Thyroid gland (tissue), 4 donors: ENCODE measurements at regions of chr5 and their contacts with region 1.

Region 1: GRCh38 chr5:55691265-55692105 is 20.6 kb downstream of the SLC38A9 start:
- DNase-seq: no peak
- H3K4me3 ChIP-seq: no peak overlapping the region
- H3K27ac ChIP-seq: peak overlapping the region in 2 of 3 donors; percentile 36 to 44
- H3K4me1 ChIP-seq: no peaks in the 10 kb centered on the region
- H3K27me3 ChIP-seq: no peaks in the 10 kb centered on the region
- CTCF ChIP-seq: peak; percentile 29 to 78 (median 55)
- POLR2A ChIP-seq: no peak

Region 2: GRCh38 chr5:55344392-55344992 is 347.0 kb before region 1 on chr5:
- intact Hi-C with region 1: loop called (anchors 5 kb)
- DNase-seq: peak; percentile 67 to 68
- H3K4me3 ChIP-seq: no peak overlapping the region
- H3K27ac ChIP-seq: no peak overlapping the region
- H3K4me1 ChIP-seq: no peaks in the 10 kb centered on the region
- H3K27me3 ChIP-seq: no peaks in the 10 kb centered on the region
- CTCF ChIP-seq: peak; percentile 57 to 90 (median 82)
- POLR2A ChIP-seq: no peak

Region 3: DNA sequence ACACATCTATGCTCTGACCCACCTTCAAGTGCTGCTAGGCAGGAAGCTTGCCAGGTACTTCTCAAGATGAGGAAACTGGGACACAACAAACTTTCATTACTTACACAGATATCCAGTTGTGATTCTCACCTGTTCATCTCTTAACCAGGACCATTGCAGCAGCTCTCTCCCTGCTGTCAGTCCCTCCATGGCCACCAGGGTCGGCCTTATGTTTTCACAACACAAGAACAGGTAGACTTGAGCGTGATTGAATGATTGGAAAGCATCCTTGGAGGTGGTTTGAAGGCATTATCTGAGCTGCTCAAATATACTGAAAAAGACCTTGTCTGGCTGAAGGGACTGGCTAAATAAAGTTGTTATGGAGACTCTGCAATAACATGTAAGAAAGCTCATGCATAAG is 289.3 kb before region 1 on chr5:
- intact Hi-C with region 1: loop called (anchors 5 kb)
- DNase-seq: no peak
- H3K4me3 ChIP-seq: no peak overlapping the region
- H3K27ac ChIP-seq: no peak overlapping the region
- H3K4me1 ChIP-seq: no peaks in the 10 kb centered on the region
- H3K27me3 ChIP-seq: no peaks in the 10 kb centered on the region
- CTCF ChIP-seq: no peak
- POLR2A ChIP-seq: no peak